WTC11 (cell line): ENCODE measurements at regions of chr17 and their contacts with region 1.

Region 1: GRCh38 chr17:39687811-39688518 is at the start of gene PGAP3:
- DNase-seq: peak; percentile 87
- ATAC-seq: peak; percentile 85
- H3K4me3 Mint-ChIP-seq: peak within 1 kb of the TSS; percentile 82
- H3K27ac Mint-ChIP-seq: peak within 1 kb of the TSS; percentile 93
- H3K4me1 Mint-ChIP-seq: peaks cover 41% of the 10 kb centered on the region
- H3K27me3 Mint-ChIP-seq: no peaks in the 10 kb centered on the region
- CTCF ChIP-seq: no peak
- total RNA-seq, gene PGAP3: 24.3 to 25.7 TPM (median 24.9 TPM) in 3 replicates

Region 2: DNA sequence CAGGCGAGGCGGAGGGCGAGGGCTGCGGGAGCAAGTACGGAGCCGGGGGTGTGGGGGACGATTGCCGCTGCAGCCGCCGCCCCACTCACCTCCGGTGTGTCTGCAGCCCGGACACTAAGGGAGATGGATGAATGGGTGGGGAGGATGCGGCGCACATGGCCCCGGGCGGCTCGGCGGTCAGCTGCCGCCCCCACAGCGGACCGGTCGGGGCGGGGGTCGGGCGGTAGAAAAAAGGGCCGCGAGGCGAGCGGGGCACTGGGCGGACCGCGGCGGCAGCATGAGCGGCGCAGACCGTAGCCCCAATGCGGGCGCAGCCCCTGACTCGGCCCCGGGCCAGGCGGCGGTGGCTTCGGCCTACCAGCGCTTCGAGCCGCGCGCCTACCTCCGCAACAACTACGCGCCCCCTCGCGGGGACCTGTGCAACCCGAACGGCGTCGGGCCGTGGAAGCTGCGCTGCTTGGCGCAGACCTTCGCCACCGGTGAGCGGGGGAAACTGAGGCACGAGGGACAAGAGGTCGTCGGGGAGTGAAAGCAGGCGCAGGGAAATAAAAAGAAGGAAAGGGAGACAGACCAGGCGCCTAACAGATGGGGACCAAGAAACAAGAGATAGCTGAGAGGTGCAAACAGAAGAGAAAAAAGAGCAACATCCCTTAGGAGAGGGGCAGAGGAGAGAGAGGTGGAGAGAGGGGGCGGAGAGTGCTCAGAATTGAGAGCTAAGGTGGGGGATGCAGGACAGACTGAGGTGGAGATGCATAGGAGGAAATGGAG is 19.6 kb before region 1 on chr17 and contains the start of gene PNMT:
- CTCF ChIA-PET with region 1: interaction called, 18 read pairs
- POLR2A ChIA-PET with region 1: interaction called, 3 read pairs
- DNase-seq: peak; percentile 83
- ATAC-seq: peak; percentile 34
- H3K4me3 Mint-ChIP-seq: peak within 1 kb of the TSS; percentile 71
- H3K27ac Mint-ChIP-seq: no peak within 1 kb of the TSS
- H3K4me1 Mint-ChIP-seq: peaks cover 48% of the 10 kb centered on the region
- H3K27me3 Mint-ChIP-seq: peaks cover 47% of the 10 kb centered on the region
- CTCF ChIP-seq: peak; percentile 26; the same call in 1 of the 2 replicates
- total RNA-seq, gene PNMT: 2.4 to 3.1 TPM (median 2.7 TPM) in 3 replicates

Region 3: DNA sequence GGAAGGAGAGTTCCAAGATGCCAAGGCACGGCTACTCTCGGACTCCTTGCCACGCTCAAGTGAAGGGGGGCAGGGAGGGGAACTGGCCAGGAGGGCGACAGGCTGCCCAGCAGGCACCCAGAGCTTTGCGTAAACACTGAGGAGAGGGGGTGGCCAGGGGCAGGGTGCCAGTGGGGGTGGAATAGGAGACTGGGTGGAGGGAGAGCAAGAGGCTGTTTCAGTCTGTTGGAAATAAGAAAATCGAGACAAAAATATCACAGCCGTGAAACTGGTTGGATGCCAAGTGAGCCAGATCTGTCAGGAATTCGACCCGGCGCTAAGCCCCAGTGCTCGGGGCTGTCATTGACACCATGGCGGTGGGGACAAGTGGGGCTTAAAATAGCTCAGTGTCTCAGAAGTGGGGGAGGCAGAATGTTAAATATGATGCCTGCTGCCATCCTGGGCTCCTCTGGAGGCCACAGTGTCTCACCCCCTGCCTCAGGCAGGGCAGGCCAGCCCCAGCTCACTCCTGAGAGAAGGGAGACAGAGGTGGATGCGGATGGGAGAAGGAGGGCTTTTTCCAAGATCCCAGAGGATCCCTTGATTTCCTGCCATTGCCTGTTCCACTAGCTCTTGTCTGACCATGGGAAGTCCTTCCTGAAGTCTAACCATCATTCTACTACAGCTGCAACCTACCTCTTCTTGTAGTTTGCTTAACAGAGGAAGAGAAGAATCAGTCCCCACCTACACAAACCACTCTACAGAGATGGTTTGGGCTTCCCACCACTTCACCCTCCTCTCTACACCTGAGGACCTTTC is 10.2 kb before region 1 on chr17:
- CTCF ChIA-PET with region 1: interaction called, 18 read pairs
- POLR2A ChIA-PET with region 1: interaction called, 3 read pairs
- DNase-seq: no peak
- ATAC-seq: no peak
- H3K4me3 Mint-ChIP-seq: no peak overlapping the region
- H3K27ac Mint-ChIP-seq: no peak overlapping the region
- H3K4me1 Mint-ChIP-seq: peaks cover 22% of the 10 kb centered on the region
- H3K27me3 Mint-ChIP-seq: no peaks in the 10 kb centered on the region
- CTCF ChIP-seq: no peak

Region 4: GRCh38 chr17:39699818-39700147 is 11.8 kb after region 1 on chr17 and contains the start of gene ERBB2:
- CTCF ChIA-PET with region 1: interaction called, 29 read pairs
- POLR2A ChIA-PET with region 1: interaction called, 25 read pairs
- DNase-seq: peak; percentile 73
- ATAC-seq: peak; percentile 43
- H3K4me3 Mint-ChIP-seq: peak within 1 kb of the TSS; percentile 95
- H3K27ac Mint-ChIP-seq: peak within 1 kb of the TSS; percentile 96
- H3K4me1 Mint-ChIP-seq: peaks cover 73% of the 10 kb centered on the region
- H3K27me3 Mint-ChIP-seq: no peaks in the 10 kb centered on the region
- CTCF ChIP-seq: no peak
- total RNA-seq, gene ERBB2: 153 to 209 TPM (median 158 TPM) in 3 replicates

Region 5: DNA sequence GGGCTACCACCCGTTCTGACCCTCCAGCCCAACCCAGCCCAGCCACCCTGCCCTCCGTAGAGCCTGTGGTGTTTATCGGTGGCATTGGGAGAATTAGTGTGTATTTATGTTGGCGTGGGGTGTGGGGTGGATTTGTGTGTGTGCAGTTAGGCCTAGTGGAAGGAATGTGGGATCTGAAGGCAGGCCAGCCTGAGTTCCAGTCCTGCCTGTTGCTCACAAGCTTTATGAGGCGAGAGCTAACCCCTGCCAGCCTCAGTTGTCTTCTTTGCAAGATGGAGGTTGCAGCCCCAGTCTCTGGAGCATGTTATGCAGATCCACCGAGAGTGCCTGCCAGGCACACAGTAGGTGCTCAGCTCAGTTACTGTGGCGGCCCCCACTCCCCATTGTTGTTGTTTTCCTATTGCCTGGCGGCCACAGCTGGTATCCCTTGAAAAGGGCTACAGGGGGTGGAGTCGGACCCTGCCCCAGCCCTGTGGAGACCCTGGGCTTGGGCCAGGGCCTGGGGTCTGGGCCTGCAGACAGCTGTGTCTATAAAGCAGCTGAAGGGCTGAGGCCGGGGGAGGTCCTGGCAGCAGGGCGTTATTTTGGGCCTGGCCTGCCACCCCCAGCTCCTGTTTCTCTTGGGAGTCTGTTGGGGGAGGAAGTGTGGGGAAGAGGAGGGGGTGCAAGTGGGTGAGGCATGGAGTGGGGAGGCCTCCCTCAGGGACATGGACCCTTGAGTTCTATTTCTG is 17.0 kb after region 1 on chr17:
- CTCF ChIA-PET with region 1: interaction called, 29 read pairs
- POLR2A ChIA-PET with region 1: interaction called, 25 read pairs
- DNase-seq: peak; percentile 38
- ATAC-seq: peak; percentile 62
- H3K4me3 Mint-ChIP-seq: no peak overlapping the region; the same call in 1 of the 2 replicates
- H3K27ac Mint-ChIP-seq: peak overlapping the region; percentile 92
- H3K4me1 Mint-ChIP-seq: peaks cover 51% of the 10 kb centered on the region
- H3K27me3 Mint-ChIP-seq: no peaks in the 10 kb centered on the region
- CTCF ChIP-seq: no peak

Region 6: DNA sequence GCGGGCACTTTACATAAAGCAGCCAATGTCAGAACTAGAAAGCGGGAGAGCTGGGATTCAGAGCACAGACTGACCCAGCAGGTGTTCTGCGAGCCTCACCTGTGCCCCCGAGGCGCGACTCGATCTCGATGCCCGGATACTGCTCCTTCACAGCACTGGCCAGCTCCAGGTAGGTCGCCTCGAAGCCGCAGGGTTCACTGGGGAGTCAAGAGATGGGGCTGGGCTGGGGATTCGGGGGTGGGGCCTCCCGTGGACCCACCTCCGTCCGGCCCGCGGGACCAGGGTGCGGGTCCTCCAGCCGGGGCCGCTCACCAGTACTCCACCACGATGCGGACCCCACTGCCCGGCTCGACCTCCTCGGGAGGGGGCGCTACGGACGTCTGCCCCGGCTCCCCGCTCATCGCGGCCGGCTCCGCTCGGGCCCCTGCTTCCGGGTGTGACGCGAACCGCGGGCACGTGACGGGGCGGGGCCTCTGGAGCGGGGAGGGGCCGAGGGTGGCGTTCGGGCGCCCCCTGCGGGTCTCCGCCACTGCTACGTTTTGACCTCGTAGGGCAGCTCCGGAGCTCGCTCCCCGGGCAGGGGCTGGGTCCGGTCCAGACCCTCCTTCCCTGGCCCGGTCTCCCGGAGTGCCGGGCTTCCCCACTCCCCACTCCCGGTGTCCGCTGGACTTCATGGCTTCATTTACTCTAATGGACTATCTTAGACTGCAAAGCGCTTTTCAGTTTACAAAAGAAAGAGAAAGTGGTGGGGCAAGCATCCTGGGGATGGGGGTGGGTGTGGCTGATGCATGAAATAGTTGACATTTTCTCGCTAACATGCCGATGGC is 42.3 kb after region 1 on chr17 and contains the start of gene MIEN1:
- CTCF ChIA-PET with region 1: interaction called, 11 read pairs
- POLR2A ChIA-PET with region 1: interaction called, 5 read pairs
- DNase-seq: peak; percentile 97
- ATAC-seq: peak; percentile 85
- H3K4me3 Mint-ChIP-seq: peak within 1 kb of the TSS; percentile 89
- H3K27ac Mint-ChIP-seq: peak within 1 kb of the TSS; percentile 91
- H3K4me1 Mint-ChIP-seq: peaks cover 14% of the 10 kb centered on the region
- H3K27me3 Mint-ChIP-seq: no peaks in the 10 kb centered on the region
- CTCF ChIP-seq: peak; percentile 81
- total RNA-seq, gene MIEN1: 40.6 to 46.7 TPM (median 46.5 TPM) in 3 replicates

Region 7: DNA sequence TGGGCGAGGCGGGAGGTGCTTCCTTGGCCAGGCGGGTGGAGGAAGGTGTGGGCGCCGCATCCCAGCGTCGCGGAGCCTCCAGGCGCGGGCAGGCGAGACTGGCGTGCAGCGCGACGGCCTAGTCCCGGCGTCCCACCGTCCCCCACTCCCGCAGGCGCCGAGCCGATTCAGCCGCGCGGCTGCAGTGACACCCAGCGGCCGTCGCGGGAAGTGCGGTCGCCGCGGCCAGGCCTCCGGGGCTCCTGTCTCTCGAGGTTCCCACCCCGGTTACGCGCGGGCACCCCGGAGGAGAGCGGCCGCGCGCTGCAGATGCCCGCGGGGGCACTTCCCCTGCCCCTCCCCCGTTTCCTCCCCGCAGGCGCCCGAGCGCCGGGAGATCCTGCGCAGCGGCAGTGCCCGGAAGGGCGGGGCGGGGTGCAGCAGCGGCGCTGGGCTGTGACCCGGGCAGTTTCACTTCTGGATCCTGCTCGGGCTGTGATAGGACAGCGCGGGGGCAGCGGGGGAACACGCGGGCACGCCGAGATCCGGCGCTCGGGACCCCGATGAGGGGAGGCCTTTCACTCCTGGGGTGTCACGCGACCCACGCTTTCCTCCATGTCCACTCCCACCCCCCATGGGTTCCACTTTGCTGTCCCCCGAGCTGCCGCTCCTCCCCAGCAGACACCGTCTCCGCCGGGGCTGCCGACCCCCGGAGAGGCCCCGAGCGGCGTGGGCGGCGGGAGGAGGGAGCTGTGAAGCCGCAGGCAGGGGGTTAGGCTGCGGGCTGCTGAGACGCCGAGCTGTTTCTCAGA is 66.4 kb after region 1 on chr17:
- CTCF ChIA-PET with region 1: interaction called, 14 read pairs
- POLR2A ChIA-PET with region 1: no interaction called
- DNase-seq: peak; percentile 81
- ATAC-seq: peak; percentile 64
- H3K4me3 Mint-ChIP-seq: peak overlapping the region; percentile 42
- H3K27ac Mint-ChIP-seq: no peak overlapping the region
- H3K4me1 Mint-ChIP-seq: peaks cover 57% of the 10 kb centered on the region
- H3K27me3 Mint-ChIP-seq: peaks cover 19% of the 10 kb centered on the region
- CTCF ChIP-seq: peak; percentile 98

Region 8: GRCh38 chr17:39863918-39864746 is 176.2 kb after region 1 on chr17 and contains the start of gene IKZF3:
- CTCF ChIA-PET with region 1: no interaction called
- POLR2A ChIA-PET with region 1: no interaction called
- DNase-seq: peak; percentile 85
- ATAC-seq: peak; percentile 94
- H3K4me3 Mint-ChIP-seq: peak within 1 kb of the TSS; percentile 54
- H3K27ac Mint-ChIP-seq: no peak within 1 kb of the TSS
- H3K4me1 Mint-ChIP-seq: peaks cover 9% of the 10 kb centered on the region
- H3K27me3 Mint-ChIP-seq: peaks cover 81% of the 10 kb centered on the region
- CTCF ChIP-seq: no peak
- total RNA-seq, gene IKZF3: 0.81 to 1.0 TPM (median 0.87 TPM) in 3 replicates